ENCODE measurements at regions of chr2 and their contacts with region 1.

Region 1: DNA sequence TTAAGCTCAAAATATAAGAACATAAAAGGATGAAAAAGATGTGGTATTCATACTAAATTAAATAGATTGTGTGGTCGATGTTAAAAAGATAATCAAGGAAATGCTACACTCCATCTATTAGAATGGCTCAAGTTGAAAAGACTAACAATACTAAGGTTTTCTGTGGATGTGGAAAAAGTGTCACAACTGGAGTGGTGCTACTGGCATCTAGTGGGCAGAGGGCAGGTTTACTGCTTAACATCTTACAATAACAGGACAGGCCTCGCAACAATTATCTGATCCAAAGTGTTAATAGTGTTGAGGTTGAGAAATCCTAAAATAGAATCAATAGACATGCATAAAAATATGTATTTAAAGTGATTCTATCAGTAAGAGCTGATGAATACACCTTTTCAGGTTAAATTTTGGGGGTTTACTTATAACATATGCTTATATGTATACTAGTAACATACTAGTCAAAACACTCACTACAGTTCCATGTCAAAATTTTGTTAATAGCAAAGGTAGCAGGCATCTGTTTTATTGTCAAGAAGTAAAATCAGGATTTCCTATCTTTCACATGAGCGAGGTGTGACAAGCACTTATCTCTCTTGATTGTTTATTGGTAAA is 91.5 kb upstream of the TMEFF2 start:
- DNase-seq: no peak
- ATAC-seq: no peak
- H3K4me3 ChIP-seq: no peak overlapping the region
- H3K27ac ChIP-seq: no peak overlapping the region
- H3K4me1 ChIP-seq: peaks cover 0 to 5% (median 0%) of the 10 kb centered on the region in 9 donors
- H3K27me3 ChIP-seq: no peaks in the 10 kb centered on the region
- CTCF ChIP-seq: peak in 5 of 9 donors; percentile 3 to 31 (median 23)

Region 2: DNA sequence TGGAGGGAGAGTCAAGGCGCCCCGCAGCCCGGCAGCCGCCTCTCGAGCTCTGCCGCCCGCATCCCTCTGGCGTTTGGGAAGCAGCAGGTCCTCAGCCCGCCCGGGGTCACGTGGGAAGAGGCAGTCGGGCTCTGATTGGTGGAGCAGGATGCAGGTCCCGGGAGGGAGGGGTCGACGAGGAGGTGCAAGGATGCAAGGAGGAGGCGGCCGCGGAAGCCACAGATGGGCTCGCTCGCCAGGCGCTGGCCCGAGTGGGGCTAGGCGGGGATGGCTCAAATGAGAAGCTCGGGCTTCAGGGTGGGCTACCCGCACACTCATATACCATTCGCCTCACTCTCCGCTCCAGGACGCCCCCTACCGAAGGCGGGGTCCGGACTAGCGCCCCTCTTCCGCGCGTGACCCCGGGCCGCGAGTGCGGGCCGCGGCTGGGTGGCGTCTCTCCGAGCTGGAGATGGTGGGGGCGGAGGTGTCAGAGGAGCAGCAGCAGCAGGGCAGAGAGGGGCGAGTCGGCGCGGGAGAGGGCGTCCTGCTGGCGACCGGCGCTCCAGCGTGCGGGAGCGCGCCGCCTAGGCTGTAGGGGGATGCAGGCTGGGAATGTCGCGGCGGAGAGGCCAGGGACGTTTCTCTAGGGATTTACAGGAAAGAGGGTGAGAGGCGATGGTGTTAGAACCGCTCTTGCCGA is 91.2 kb before region 1 on chr2 and contains the start of gene TMEFF2:
- intact Hi-C with region 1: loop called in 1 of 10 experiments (anchors 10 kb)
- DNase-seq: peak; percentile 61 to 71
- ATAC-seq: peak; percentile 57 to 91 (median 76)
- H3K4me3 ChIP-seq: peak within 1 kb of the TSS; percentile 39 to 60 (median 49)
- H3K27ac ChIP-seq: no peak within 1 kb of the TSS
- H3K4me1 ChIP-seq: peaks cover 8 to 37% (median 29%) of the 10 kb centered on the region in 9 donors
- H3K27me3 ChIP-seq: peaks cover 24 to 99% (median 94%) of the 10 kb centered on the region in 7 donors
- CTCF ChIP-seq: peak in 2 of 9 donors; percentile 17 to 20
- total RNA-seq, gene TMEFF2: 0.09 to 0.41 (median 0.17) TPM in 3 of 10 donors, not detected in the others

Measured in heart right ventricle (tissue), 16 donors.